AG04449 (cell line): ENCODE measurements at regions of chr3 and their contacts with region 1.

Region 1: DNA sequence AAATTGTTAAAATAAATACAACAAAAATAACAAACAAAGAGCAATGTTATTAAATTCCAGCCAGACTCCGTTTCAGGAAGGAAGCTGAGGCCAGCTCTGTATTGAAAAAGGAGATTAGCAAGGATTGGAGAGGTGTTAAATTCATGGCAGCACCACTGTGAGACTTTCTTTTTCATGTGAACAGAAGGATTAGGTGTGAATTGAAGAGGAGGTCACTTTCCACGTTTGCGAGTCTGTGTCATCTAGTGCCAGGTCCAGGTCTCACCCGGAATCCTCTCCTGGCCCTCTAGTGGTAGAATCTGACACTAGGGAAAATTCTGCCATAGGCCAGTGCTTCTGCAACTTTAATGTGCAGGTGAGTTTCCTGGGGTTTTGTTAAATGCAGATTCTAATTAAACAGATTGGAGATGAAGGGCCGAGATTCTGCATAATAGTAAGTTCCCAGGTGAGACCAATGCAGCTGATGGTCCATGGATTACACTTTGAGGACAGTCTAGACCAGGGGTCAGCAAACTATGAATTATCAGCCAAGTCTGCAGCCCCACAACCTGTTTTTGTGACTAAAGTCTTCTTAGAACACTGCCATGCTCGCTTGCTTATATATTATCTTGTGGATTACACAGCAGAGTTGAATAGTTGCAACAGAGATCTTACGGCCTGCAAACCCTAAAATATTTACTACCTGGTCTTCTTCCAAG is 9.2 kb upstream of the SLC6A1 start:
- DNase-seq: no peak
- H3K4me3 ChIP-seq: no peak overlapping the region
- CTCF ChIP-seq: peak; percentile 70

Region 2: DNA sequence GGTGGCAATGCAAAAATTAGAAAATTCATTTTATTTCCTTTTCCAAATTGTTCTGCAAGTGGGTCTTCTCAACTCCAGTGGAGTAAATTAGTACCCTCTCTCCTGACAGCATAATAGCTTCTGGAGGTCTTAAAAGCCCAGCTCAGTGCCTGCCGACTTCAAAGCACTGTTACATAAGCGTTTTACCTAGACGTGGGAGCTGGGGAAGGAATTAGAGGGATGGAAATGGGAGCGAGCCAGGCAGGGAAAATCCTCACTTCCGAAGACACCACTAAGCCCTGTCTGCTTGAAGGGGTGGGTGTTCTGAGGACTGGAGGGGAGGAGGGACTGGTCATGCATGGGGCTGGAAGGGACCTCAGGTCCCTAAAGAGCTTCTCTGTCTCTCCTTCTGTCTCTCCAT is 68.0 kb before region 1 on chr3:
- CTCF ChIA-PET with region 1: no interaction called
- POLR2A ChIA-PET with region 1: no interaction called
- DNase-seq: no peak
- H3K4me3 ChIP-seq: no peak overlapping the region
- CTCF ChIP-seq: no peak

Region 3: DNA sequence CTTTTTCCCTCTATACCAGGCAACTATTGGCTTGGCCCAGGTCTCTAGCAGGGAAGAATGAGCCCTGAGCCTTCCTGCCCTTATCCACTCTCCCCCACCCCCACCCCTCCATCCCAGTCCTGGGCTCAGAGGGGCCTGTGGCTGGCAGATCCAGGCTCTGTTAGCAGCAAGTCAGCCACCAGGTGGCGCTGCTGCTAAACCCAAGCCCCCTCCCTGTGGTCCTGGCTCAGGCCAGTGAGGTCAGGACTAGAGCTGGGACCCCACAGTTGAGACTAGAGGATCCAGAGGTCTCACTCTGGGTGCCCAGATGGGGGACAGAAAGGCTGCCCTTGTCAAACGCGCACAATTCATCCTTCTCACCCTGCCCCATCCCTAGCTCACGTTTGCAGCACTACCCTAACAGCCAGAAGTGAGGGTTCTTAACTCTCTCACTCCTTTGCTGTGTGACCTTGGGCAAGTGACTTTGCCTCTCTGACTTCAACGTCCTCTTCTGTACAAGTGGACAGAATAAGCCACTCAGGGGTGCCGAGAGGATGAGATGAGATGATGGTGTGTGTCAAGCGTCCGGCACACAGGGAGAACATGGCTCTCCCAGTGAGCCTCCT is 37.6 kb before region 1 on chr3:
- CTCF ChIA-PET with region 1: interaction called, 17 read pairs
- POLR2A ChIA-PET with region 1: no interaction called
- DNase-seq: no peak
- H3K4me3 ChIP-seq: no peak overlapping the region
- CTCF ChIP-seq: peak; percentile 85

Region 4: GRCh38 chr3:10970306-10970960 is 12.9 kb before region 1 on chr3:
- CTCF ChIA-PET with region 1: interaction called, 10 read pairs
- POLR2A ChIA-PET with region 1: no interaction called
- DNase-seq: no peak
- H3K4me3 ChIP-seq: no peak overlapping the region
- CTCF ChIP-seq: no peak

Region 5: GRCh38 chr3:11001020-11001656 is 17.8 kb after region 1 on chr3:
- CTCF ChIA-PET with region 1: interaction called, 15 read pairs
- POLR2A ChIA-PET with region 1: no interaction called
- DNase-seq: no peak
- H3K4me3 ChIP-seq: no peak overlapping the region
- CTCF ChIP-seq: no peak

Region 6: DNA sequence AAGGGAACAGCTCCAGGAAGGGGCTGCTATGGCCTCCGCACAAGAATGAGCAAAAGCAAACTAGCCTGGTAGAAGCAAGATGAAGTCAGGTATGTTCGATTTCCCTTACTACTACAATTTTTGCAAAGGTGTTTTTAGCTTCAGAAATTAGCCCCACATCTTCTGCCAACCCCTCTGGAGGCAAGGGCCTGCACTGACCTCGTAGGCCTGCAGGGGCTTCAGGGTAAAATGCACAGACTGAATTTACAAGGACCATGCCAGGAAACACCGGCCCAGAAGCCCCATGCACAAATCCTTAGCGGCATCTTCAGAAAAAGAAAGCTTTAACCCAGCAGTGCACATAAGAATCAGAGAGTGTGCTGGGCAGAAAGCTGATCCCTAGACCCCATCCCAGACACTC is 62.2 kb after region 1 on chr3:
- CTCF ChIA-PET with region 1: no interaction called
- POLR2A ChIA-PET with region 1: no interaction called
- DNase-seq: no peak
- H3K4me3 ChIP-seq: no peak overlapping the region
- CTCF ChIP-seq: no peak

Region 7: DNA sequence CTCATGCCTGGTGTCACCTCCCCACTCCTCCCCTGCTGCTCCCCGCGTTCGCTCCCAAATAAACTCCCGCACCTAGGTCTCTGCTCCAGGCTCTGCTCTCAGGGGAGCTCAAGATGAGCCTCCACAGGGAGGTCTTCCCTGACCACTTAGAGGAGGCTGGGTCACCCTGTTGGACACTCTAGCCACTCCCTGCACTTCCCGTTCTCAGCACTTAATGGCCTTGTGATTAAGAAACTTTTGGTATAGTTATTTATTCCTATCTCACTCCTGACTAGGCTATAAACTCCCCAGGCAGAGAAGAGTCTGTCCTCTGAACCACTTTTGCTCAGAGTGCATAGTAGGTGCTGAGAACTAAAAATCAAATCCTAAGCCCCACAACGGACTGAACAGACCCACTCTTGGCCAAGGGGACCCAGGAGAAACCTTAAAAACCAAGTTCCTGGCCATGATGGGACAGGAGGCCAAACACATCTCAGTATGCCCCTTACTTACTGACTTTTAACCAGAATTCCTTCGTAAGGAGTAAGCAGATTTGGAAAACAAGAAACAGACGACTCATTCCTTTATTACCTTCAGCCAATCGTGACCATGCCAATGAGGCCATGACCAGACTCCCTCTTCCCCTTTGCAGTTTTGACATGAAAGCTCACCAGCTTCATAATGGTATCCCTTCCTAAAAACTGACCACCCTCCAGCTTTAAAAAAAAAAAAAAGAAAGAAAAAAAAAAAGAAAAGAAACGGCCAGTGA is 101.9 kb after region 1 on chr3:
- CTCF ChIA-PET with region 1: no interaction called
- POLR2A ChIA-PET with region 1: no interaction called
- DNase-seq: no peak
- H3K4me3 ChIP-seq: no peak overlapping the region
- CTCF ChIP-seq: no peak

Region 8: GRCh38 chr3:11300970-11301369 is 317.6 kb after region 1 on chr3:
- CTCF ChIA-PET with region 1: no interaction called
- POLR2A ChIA-PET with region 1: no interaction called
- DNase-seq: no peak
- H3K4me3 ChIP-seq: no peak overlapping the region
- CTCF ChIP-seq: no peak